ENCODE measurements at regions of chr17 and their contacts with region 1.

Region 1: GRCh38 chr17:72118335-72119076 is 2.3 kb upstream of the SOX9 start:
- DNase-seq: peak; percentile 71 to 93
- H3K4me3 ChIP-seq: no peak overlapping the region
- CTCF ChIP-seq: peak in 1 of 3 donors; percentile 74
- POLR2A ChIP-seq: no peak

Region 2: DNA sequence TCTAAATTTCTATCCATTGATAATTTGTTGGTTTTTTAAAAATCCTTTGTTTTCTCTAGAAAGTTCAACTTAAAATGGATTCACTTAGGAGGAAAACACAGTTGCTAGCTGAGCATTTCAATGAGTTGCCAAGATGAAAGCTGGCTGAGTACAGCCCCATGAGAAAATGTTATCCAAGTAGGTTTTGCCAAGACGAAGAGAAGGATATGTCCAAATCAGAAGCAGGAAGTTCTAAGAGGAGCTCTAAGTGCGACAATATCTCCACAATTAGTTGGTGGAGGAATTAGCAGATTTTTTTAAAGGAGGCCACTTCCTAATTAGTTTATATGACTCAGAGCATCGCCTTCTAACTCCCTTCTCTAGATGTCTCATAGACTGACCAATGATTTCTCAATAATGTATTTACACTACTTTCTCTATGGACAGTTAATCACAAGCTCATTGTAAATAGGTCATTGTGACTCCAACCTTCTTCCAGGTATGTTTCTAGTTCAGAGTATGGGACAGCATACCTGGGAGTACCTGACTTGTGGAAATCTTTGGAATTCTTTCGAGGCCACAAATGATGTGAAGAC is 871.0 kb before region 1 on chr17:
- intact Hi-C with region 1: loop called (anchors 10 kb)
- DNase-seq: no peak
- H3K4me3 ChIP-seq: no peak overlapping the region
- CTCF ChIP-seq: no peak
- POLR2A ChIP-seq: no peak

Region 3: GRCh38 chr17:71472809-71473789 is 645.4 kb before region 1 on chr17:
- intact Hi-C with region 1: loop called (anchors 10 kb)
- DNase-seq: no peak
- H3K4me3 ChIP-seq: no peak overlapping the region
- CTCF ChIP-seq: peak in 1 of 3 donors; percentile 19
- POLR2A ChIP-seq: no peak

Region 4: DNA sequence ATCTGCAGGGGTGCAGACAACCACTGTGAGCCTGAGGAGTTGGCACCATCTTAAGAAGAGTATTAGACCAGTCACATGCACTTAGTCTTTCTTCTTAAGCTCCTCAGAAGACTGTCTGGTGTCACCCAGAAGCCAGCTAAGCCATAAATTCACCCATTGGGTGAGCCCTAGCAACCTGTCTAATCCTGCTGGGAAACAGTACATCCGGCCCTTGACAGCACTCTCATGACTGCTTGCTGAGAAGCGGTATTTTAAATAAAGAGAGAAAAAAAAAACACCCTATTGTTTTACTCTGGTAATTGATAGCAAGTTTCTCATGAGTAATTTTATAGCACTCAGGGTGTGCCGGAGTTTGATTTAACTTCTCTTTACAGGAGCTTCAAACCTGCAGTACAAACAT is 137.0 kb after region 1 on chr17:
- intact Hi-C with region 1: no loop called
- DNase-seq: no peak
- H3K4me3 ChIP-seq: no peak overlapping the region
- CTCF ChIP-seq: no peak
- POLR2A ChIP-seq: no peak

Region 5: GRCh38 chr17:72539981-72540897 is 421.7 kb after region 1 on chr17:
- intact Hi-C with region 1: loop called (anchors 10 kb)
- DNase-seq: peak; percentile 46 to 94
- H3K4me3 ChIP-seq: no peak overlapping the region
- CTCF ChIP-seq: peak in 1 of 3 donors; percentile 76
- POLR2A ChIP-seq: no peak

Measured in lower leg skin (tissue), 4 donors.